T-cell (primary cell): ENCODE measurements at regions of chr12 and their contacts with region 1.

Region 1: GRCh38 chr12:116442946-116443345 is 116.2 kb upstream of the MAP1LC3B2 start:
- DNase-seq: no peak
- ATAC-seq: no peak
- H3K4me3 ChIP-seq: no peak overlapping the region
- H3K4me3 Mint-ChIP-seq: no peak overlapping the region
- H3K27ac ChIP-seq: no peak overlapping the region
- H3K27ac Mint-ChIP-seq: no peak overlapping the region
- H3K4me1 ChIP-seq: peaks cover 0 to 3% of the 10 kb centered on the region in 2 experiments
- H3K4me1 Mint-ChIP-seq: peaks cover 2 to 18% (median 2%) of the 10 kb centered on the region in 3 donors
- H3K27me3 ChIP-seq: peaks cover 0 to 2% of the 10 kb centered on the region in 2 experiments
- H3K27me3 Mint-ChIP-seq: peaks cover 0 to 1% of the 10 kb centered on the region in 2 donors

Region 2: DNA sequence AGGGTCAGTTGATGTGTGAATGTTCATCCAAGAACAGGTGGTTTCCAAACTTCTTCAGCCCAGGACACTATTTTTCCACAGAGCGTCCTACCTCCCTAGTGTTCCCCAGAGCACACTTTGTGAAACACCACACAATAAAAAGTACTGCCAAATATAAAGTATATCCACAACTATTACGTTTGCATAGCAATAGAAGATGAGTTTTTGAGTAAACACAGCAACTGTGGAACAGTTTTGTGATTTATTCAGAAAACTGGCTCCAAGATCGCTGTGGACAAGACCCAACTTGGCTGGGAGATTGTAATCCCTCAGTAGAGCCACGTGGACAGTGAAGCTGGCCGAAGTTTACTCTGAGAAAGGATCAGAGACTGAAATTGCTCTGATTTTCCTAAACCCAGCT is 101.7 kb after region 1 on chr12:
- CTCF ChIA-PET with region 1: no interaction called
- POLR2A ChIA-PET with region 1: interaction called in 1 of 2 experiments, 10 read pairs
- DNase-seq: no peak
- ATAC-seq: no peak
- H3K4me3 ChIP-seq: no peak overlapping the region
- H3K4me3 Mint-ChIP-seq: no peak overlapping the region
- H3K27ac ChIP-seq: no peak overlapping the region
- H3K27ac Mint-ChIP-seq: no peak overlapping the region
- H3K4me1 ChIP-seq: no peaks in the 10 kb centered on the region
- H3K4me1 Mint-ChIP-seq: peaks cover 0 to 10% (median 5%) of the 10 kb centered on the region in 3 donors
- H3K27me3 ChIP-seq: peaks cover 0 to 4% of the 10 kb centered on the region in 2 experiments
- H3K27me3 Mint-ChIP-seq: no peaks in the 10 kb centered on the region